ENCODE measurements at regions of chr12 and their contacts with region 1.

Region 1: GRCh38 chr12:69470189-69471075 is at the start of gene FRS2:
- DNase-seq: peak; percentile 77
- H3K4me3 Mint-ChIP-seq: peak within 1 kb of the TSS; percentile 98
- H3K27ac Mint-ChIP-seq: peak within 1 kb of the TSS; percentile 96
- H3K4me1 Mint-ChIP-seq: peaks cover 52% of the 10 kb centered on the region
- H3K27me3 Mint-ChIP-seq: no peaks in the 10 kb centered on the region
- total RNA-seq, gene FRS2: 10.8 and 11.4 TPM in 2 replicates

Region 2: DNA sequence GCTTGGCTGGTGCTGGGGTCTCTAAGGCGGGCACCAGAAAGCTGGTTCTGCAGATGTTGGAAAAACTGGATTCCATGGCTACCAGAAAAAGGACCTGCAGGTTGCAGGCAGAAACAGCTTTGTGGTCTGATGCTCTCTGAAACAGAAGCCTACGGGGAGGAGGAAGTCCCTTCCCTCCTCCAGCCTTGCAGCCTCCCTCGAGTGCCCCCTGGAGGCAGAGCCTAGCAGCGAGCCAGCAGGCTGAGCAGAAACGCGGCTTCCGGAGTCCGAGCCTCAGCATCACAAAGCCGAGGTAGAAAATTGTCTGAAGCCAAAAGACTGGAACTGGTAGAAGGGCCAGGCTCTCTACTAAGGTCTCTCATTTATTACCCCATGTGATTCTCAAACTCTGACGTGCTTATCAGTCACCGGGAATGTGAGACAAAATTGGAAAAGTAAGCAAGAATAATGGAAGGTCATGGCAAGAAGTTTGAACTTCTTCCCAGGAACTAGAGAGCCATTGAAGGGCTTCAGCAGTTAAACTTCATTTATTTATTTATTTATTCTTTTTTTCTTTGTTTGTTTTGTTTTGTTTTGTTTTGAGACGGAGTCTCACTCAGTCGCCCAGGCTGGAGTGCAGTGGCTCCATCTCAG is 313.3 kb before region 1 on chr12:
- intact Hi-C with region 1: loop called (anchors 5 kb)
- DNase-seq: peak; percentile 85
- H3K4me3 Mint-ChIP-seq: no peak overlapping the region
- H3K27ac Mint-ChIP-seq: no peak overlapping the region
- H3K4me1 Mint-ChIP-seq: peaks cover 47% of the 10 kb centered on the region
- H3K27me3 Mint-ChIP-seq: no peaks in the 10 kb centered on the region

Region 3: DNA sequence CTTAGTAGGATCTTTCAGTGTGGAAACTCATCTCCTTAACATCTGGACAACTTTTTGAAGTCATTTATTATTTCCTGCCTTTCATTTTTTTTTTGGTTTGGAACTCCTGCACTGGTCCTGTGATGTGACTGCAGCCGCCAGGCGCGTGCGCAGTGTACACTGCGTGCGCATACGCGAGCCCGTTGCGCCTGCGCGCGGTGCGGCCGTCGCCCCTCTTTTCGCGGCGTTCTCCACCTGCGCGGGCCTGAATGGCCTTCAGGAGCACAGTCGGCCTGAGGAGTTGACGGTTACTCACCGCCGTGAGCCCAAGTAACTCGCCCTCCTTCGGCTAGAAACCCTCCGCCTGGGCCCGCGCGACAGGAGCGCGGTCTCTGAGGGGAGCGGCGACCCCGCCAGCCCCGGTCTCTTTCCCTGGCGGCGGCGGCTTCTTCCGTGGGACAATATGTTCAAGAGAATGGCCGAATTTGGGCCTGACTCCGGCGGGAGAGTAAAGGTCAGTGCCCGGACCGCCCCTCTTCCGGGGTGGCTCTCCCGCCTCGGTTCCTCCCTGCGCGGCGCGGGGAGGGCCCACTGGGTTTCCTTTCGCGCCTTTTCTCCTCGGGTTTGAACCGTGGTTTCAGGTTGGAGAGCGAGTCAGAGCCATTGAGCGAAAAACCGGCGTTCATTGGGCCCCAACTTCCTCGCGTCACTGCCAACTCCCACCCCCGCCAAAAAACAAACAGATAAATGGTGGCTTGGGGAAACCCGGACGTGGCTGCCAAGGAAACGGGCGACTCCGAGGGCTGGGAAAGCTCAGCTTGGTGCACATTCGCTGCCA is 110.7 kb before region 1 on chr12 and contains the start of gene YEATS4:
- intact Hi-C with region 1: loop called (anchors 1 kb)
- DNase-seq: peak; percentile 88
- H3K4me3 Mint-ChIP-seq: peak within 1 kb of the TSS; percentile 84
- H3K27ac Mint-ChIP-seq: peak within 1 kb of the TSS; percentile 97
- H3K4me1 Mint-ChIP-seq: peaks cover 30% of the 10 kb centered on the region
- H3K27me3 Mint-ChIP-seq: peaks cover 3% of the 10 kb centered on the region
- total RNA-seq, gene YEATS4: 38.9 and 39.0 TPM in 2 replicates

Region 4: GRCh38 chr12:69442894-69443293 is 27.5 kb before region 1 on chr12:
- intact Hi-C with region 1: no loop called
- DNase-seq: no peak
- H3K4me3 Mint-ChIP-seq: no peak overlapping the region
- H3K27ac Mint-ChIP-seq: no peak overlapping the region
- H3K4me1 Mint-ChIP-seq: no peaks in the 10 kb centered on the region
- H3K27me3 Mint-ChIP-seq: no peaks in the 10 kb centered on the region

Region 5: GRCh38 chr12:69457433-69457832 is 13.0 kb before region 1 on chr12:
- intact Hi-C with region 1: no loop called
- DNase-seq: no peak
- H3K4me3 Mint-ChIP-seq: no peak overlapping the region
- H3K27ac Mint-ChIP-seq: no peak overlapping the region
- H3K4me1 Mint-ChIP-seq: no peaks in the 10 kb centered on the region
- H3K27me3 Mint-ChIP-seq: peaks cover 1% of the 10 kb centered on the region

Region 6: DNA sequence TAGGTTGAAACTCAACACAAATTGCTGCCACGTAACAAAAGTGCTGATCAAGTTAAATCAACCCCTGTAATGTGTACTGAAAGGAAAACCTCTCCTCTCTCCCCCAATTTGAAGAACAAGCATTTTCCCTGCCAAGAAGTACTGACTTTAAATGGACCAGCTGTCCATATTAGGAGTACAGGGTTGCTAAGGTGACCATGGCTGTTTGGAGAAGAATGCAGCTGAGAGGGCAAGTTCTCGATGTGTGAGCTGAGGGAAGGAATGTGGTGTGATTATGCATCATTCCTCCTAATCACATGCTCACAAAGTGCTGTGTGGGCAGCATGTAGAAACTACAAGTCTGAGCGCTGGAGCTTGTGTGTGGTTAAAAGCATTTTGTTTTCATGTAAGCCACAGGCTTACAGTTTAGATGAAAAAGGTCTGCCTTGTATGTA is 64.0 kb after region 1 on chr12:
- intact Hi-C with region 1: loop called (anchors 2 kb)
- DNase-seq: peak; percentile 24
- H3K4me3 Mint-ChIP-seq: no peak overlapping the region
- H3K27ac Mint-ChIP-seq: peak overlapping the region; percentile 73
- H3K4me1 Mint-ChIP-seq: peaks cover 22% of the 10 kb centered on the region
- H3K27me3 Mint-ChIP-seq: no peaks in the 10 kb centered on the region

Region 7: DNA sequence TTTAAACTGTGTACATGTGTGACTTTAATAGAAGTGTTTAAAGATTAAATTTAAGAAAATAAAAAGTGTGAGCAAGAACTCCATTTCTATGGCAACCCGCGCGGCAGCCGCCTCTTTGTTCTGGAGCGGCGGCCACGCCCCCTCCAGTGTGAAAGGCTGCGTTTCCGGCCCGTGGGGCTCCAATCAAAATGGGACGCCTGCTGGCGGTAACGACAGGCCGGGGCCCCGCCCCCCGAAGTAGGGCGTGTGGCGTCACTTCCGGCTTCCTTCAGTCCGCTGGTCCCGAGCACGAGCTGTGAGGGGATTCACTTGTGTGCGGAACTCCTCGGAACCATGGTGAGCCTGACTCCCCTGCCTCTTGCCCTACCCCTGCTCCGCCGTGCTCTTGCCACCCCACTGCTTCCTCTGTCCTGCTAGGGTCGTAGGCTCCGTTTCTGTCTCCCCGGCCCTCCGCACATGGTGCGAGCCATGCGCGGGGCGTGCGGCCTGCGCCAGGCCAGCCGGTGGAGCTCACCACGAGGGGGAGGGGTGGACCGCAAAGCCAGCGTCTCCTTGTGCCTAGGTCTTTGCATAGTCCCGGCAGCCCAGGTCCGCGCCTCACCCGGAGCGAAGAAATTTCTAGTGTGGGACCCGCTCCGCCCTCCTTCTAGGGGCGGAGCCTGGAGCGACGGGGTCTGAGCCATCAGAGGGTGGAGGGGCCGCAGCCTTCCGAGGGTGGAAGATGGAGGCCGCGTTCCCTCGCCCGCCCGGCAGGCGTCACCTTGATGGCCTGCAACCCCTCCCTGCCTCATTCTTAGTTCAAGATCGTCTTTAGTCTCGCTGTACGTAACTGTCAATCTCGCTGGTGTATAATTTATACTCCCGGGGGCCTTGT is 115.0 kb after region 1 on chr12 and contains the start of gene CCT2:
- intact Hi-C with region 1: loop called (anchors 5 kb)
- DNase-seq: peak; percentile 95
- H3K4me3 Mint-ChIP-seq: peak within 1 kb of the TSS; percentile 97
- H3K27ac Mint-ChIP-seq: peak within 1 kb of the TSS; percentile 97
- H3K4me1 Mint-ChIP-seq: peaks cover 15% of the 10 kb centered on the region
- H3K27me3 Mint-ChIP-seq: no peaks in the 10 kb centered on the region
- total RNA-seq, gene CCT2: 409 and 416 TPM in 2 replicates